Activated CD4-positive, alpha-beta T cell treated with anti-CD3 and anti-CD28 coated beads, Interleukin-2, amount 10 ng/mL, durations not matched to agents 24 days and 14 days (primary cell): ENCODE measurements at regions of chr1 and their contacts with region 1.

Region 1: DNA sequence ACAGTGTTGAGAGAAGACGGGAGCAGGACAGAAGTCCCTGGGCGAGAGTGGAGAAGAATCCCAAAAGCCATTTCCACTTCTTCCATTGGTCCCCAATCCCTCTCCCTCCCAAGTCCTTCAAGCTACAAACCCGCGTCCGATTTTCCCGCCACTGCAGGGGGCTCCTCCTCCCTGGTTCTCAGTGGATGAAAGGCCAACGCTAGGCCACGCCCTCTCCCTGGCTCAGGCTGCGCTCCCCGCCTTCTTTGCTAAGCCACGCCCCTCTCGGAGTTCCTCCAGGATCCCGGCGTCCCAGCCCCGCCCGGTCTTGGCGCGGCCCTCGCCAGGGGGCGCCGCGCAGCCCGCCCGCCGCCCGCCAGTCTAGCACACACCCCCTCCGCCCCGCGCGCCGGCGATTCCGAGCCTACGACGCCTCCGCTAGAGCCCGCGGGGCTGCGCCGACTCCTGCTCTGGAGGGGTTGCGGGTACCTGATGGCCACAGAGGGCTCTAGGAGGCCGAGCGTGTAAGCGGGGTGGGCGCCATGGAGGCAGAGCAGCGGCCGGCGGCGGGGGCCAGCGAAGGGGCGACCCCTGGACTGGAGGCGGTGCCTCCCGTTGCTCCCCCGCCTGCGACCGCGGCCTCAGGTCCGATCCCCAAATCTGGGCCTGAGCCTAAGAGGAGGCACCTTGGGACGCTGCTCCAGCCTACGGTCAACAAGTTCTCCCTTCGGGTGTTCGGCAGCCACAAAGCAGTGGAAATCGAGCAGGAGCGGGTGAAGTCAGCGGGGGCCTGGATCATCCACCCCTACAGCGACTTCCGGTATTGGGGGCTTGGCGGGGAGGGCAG is at the start of gene HCN3:
- DNase-seq: peak; percentile 98
- H3K4me3 Mint-ChIP-seq: peak within 1 kb of the TSS; percentile 75
- H3K27ac Mint-ChIP-seq: peak within 1 kb of the TSS; percentile 34
- H3K4me1 Mint-ChIP-seq: peaks cover 25% of the 10 kb centered on the region
- H3K27me3 Mint-ChIP-seq: no peaks in the 10 kb centered on the region
- total RNA-seq, gene HCN3: 3.2 and 3.8 TPM in 2 replicates

Region 2: DNA sequence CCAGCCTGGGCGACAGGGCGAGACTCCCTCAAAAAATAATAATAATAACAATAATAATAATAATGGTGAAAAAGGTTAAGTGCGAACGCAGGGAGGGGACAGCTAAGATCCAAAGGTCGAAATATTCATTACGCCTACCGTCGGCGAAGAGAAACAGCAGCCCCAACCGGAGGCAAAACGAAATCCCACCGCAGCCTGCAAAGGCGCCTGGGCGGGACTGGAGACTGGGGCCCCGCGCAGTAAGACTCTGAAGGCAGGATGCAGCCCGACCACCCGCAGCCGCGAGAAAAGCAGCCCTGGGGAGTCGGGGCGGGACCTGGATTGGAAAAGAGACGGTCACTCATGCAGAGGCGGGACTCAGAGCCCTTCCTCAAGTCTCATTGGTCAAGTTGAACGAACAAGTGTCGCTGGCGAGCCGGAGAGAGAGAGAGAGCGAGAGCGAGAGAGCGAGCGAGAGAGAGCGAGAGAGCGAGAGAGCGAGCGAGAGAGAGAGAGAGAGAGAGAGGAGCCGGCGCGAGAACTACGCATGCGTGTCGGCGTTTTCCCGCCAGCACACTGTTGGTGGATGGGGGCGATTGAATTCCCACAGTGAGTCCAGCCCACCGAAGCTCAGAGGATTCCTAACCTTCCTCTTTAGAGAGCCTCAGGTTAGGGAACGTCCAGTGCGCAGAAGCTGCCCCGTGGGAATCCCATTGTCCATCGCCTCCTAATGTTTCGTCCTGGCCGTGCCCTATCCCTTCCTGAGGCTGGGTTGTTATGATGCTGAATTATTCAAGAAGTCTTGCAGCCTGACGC is 32.7 kb before region 1 on chr1:
- intact Hi-C with region 1: loop called (anchors 1 kb)
- DNase-seq: peak; percentile 99
- H3K4me3 Mint-ChIP-seq: peak overlapping the region; percentile 81
- H3K27ac Mint-ChIP-seq: peak overlapping the region; percentile 96
- H3K4me1 Mint-ChIP-seq: peaks cover 49% of the 10 kb centered on the region
- H3K27me3 Mint-ChIP-seq: peaks cover 3% of the 10 kb centered on the region

Region 3: DNA sequence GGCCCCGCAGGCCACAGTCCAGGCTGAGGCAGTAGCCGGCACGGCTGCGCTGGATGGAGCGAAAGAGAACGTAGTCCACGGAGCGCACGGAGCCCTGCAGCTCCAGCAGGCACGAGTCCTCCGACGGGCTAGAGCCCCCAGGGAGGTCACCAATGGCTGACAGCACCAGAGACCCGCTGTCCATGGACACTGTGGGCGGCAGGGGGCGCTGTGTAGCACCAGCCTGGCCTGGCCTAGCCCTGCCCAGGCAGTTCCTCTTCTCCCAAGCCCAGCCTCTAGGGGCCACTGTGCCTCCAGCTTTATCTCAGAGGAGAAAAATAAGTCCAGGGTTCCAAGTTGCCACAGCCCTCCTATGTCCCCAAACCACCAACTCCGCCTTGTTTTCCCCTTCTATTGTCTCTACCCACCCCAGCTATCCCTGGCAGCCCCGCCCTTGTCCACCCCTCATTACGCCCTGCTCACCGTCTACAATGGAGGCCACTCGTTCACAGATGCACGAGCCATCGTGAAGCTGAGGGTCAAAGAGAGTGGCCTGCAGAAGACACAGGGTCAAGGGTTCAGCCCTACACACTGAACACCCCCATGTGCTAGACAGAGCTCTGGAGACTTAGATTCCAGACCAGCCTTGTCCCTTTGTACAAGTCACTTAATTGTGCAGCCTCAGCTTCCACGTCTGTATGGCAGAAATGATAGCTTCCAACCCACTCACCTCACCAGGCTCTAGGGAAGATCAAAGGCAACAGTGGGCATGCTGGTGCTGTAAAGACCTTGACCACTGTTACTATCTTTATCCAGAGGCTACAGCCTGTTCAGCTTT is 26.4 kb before region 1 on chr1:
- intact Hi-C with region 1: loop called (anchors 2 kb)
- DNase-seq: peak; percentile 99
- H3K4me3 Mint-ChIP-seq: peak overlapping the region; percentile 58
- H3K27ac Mint-ChIP-seq: no peak overlapping the region
- H3K4me1 Mint-ChIP-seq: peaks cover 32% of the 10 kb centered on the region
- H3K27me3 Mint-ChIP-seq: no peaks in the 10 kb centered on the region

Region 4: DNA sequence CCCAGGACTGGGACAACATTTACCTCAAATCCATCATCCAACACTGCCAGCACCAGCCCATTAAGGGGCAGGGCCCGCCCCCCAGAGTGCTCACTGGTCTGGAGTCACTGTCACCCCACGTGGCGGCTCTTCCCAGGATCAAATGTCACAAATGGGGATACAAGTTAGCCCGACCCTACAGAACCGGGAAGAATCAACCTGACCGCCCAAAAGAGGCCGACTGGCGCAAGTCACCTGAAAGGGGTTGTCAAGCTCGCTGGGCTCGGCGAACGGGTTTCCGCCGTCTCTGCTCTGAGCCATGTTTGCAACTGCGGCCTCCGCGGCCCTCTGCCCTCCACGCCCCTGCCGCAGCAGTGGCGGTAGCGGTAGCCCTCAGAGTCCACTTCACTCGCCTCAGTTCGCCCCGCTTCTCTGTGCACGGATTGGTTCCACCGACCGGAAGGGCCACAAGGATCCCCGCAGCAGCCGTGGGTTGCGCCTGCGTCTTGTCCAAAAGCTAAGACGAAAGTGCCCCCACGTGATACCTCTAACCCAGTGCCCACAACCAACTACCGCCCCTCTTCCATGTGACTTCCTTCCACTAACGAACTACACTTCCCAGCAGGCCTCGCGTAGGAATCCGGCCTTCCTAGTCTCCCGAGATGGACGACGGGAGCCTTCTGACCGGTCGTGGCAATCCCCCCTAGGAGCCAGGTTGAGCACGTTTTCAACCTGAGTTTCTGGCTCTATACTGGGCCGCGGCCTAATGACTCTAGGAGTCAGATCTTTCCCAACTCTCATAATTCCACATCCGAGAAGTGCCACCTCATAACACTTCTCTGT is 15.2 kb before region 1 on chr1 and contains the start of gene SCAMP3:
- intact Hi-C with region 1: loop called (anchors 1 kb)
- DNase-seq: peak; percentile 96
- H3K4me3 Mint-ChIP-seq: peak within 1 kb of the TSS; percentile 96
- H3K27ac Mint-ChIP-seq: peak within 1 kb of the TSS; percentile 91
- H3K4me1 Mint-ChIP-seq: peaks cover 30% of the 10 kb centered on the region
- H3K27me3 Mint-ChIP-seq: no peaks in the 10 kb centered on the region
- total RNA-seq, gene SCAMP3: 152 and 158 TPM in 2 replicates

Region 5: DNA sequence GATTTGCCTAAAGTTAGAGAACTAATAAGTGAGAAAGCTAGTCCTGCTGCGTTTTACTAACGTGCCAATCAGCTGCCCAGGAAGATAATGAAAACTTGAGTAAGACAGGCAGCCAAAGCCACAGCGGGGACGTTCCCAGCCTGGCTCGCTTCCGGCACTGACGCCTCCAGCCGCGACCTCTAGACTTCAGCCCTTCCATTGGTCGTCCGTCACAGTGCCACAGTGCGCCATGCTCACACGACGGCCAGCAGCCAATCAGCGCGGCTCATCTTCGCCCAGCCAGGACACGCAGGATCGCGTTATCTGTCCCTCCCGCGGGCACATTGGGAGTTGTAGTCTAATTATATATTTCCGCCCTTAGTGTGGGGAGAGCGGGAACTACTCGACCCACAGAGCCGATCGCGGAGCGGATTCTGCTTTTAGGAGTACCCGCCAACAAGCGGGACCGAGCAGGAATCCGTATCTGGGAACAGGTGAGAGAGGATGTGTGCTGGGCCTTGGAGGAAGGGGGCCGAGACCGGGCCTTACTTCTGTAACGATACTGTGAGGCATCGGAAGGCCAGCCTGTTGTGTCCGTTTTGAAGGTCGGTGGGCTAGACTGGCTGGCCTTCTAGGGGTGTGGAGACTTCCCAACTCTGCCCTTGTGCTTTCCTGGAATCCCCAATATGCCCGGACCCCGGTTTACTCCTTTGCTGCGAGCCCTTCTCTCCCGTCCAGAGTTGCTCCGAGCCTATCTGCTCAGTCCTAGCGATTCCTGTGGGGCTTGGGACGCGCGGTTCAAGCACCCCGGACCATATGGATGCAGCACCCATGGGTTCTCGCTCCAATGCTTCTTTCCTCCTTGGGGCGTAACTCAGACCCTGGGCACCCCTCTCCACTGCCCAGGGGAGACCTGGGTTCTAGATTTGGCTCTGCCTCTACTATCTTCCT is 31.5 kb after region 1 on chr1 and contains the start of gene FDPS:
- intact Hi-C with region 1: loop called (anchors 1 kb)
- DNase-seq: peak; percentile 99
- H3K4me3 Mint-ChIP-seq: peak within 1 kb of the TSS; percentile 99
- H3K27ac Mint-ChIP-seq: peak within 1 kb of the TSS; percentile 92
- H3K4me1 Mint-ChIP-seq: peaks cover 39% of the 10 kb centered on the region
- H3K27me3 Mint-ChIP-seq: no peaks in the 10 kb centered on the region
- total RNA-seq, gene FDPS: 321 and 324 TPM in 2 replicates

Region 6: DNA sequence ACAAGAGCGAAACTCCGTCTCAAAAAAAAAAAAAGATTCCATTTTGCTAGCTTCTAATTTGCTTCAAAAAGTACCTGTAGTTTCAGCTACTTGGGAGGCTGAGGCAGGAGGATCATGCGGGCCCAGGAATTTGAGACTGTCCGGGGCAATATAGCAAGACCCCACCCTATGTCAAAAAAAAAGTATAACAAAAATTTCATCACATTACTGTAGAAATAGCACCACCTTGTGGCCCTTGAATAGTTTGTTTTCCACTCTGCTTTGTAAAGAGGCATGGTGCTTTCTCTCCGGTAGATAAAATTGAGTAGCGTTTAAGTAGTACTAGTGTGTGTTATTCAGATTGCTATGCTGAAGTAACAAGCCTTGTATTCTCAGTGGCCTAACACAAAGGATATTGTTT is 314.5 kb after region 1 on chr1:
- intact Hi-C with region 1: loop called (anchors 10 kb)
- DNase-seq: peak; percentile 83
- H3K4me3 Mint-ChIP-seq: no peak overlapping the region
- H3K27ac Mint-ChIP-seq: no peak overlapping the region
- H3K4me1 Mint-ChIP-seq: no peaks in the 10 kb centered on the region
- H3K27me3 Mint-ChIP-seq: no peaks in the 10 kb centered on the region